ENCODE measurements at regions of chr10 and their contacts with region 1.

Region 1: GRCh38 chr10:51348622-51349021 is 274.3 kb downstream of the PRKG1 start:
- DNase-seq: no peak
- ATAC-seq: no peak
- H3K4me3 ChIP-seq: no peak overlapping the region
- H3K27ac ChIP-seq: no peak overlapping the region
- H3K4me1 ChIP-seq: no peaks in the 10 kb centered on the region
- H3K27me3 ChIP-seq: no peaks in the 10 kb centered on the region
- CTCF ChIP-seq: no peak

Region 2: GRCh38 chr10:51311228-51311627 is 37.4 kb before region 1 on chr10:
- intact Hi-C with region 1: loop called in 1 of 2 experiments (anchors 5 kb)
- DNase-seq: no peak
- ATAC-seq: peak; percentile 90 to 93 (median 92)
- H3K4me3 ChIP-seq: no peak overlapping the region
- H3K27ac ChIP-seq: peak overlapping the region; percentile 56
- H3K4me1 ChIP-seq: peaks cover 23% of the 10 kb centered on the region
- H3K27me3 ChIP-seq: no peaks in the 10 kb centered on the region
- CTCF ChIP-seq: no peak